PC-3 (cell line): ENCODE measurements at regions of chrX and their contacts with region 1.

Region 1: DNA sequence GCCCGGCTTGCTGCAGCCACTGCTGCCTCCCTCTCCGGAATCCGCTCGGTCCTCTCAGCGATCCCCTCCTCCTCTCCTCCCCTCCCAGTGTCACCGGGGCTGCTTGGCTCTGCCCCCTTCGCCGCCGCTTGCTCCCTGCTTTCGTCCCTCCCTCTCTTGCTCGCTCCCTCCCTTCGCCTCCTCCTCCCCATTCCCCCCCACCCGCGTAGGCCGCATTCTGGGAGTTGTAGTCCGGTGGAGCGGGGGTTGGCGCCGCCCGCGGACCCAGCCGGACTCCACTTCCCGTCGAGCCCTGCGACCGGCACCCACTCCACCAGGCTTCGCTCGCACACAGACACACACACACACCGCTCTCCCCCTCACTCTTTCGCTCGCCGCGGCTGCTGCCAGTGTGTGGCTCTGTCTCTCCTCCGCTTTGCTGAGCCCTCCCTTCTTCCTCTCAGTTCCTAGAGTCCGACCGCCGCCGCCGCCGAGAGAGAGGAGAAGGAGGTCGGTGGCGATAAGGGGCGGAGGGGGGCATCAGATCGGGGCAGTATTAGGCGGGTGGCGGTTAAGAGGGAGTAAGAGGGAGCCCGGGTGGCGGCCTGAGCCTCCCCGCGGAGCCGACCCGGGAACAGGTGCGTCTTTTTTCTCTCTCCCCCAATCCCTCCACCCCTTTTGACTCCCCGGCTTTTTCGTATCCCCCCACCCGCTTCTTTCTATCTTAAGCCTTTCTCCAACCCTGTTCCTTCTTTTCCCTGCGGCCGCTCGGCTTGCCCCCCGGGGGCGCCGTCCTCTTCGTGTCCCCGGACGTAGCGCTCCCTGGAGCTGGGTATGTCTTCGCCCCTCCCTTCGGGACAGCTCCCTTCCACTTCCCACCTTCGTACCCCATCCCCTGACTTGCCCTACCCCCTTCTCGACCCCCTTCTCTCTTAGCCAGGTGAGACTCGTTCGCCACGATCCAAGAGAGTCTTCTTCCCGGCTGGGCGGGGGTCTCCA is at the start of gene BCORL1:
- DNase-seq: peak; percentile 88
- ATAC-seq: peak; percentile 82
- H3K4me3 ChIP-seq: no peak within 1 kb of the TSS; the same call in 1 of the 2 replicates
- H3K27ac ChIP-seq: no peak within 1 kb of the TSS
- H3K4me1 ChIP-seq: peaks cover 5% of the 10 kb centered on the region; the same call in 1 of the 2 replicates
- H3K27me3 ChIP-seq: no peaks in the 10 kb centered on the region
- CTCF ChIP-seq: no peak
- total RNA-seq, gene BCORL1: 3.1 and 3.9 TPM in 2 replicates

Region 2: GRCh38 chrX:129510331-129510730 is 472.2 kb before region 1 on chrX:
- CTCF ChIA-PET with region 1: no interaction called
- POLR2A ChIA-PET with region 1: no interaction called
- intact Hi-C with region 1: no loop called
- DNase-seq: no peak
- ATAC-seq: no peak
- H3K4me3 ChIP-seq: no peak overlapping the region
- H3K27ac ChIP-seq: no peak overlapping the region
- H3K4me1 ChIP-seq: no peaks in the 10 kb centered on the region
- H3K27me3 ChIP-seq: no peaks in the 10 kb centered on the region
- CTCF ChIP-seq: no peak

Region 3: DNA sequence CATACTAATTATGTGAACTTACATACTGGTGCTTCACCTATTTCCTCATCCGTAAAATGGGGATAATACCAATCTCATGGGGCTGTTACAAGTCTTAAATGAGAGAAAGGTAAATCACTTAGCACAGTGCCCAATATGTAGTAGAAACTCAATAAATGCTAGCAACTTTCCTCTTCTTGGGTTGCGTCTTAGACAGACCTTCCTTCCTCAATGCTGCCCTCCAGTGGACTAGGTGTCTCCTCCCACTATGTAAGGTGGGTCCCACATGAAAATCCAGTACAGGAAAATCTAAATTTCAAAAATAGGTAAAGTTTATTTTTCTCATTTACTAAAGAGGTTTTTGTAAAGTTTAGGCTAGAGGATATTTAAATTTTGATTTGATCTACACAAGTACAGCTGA is 159.4 kb before region 1 on chrX:
- CTCF ChIA-PET with region 1: no interaction called
- POLR2A ChIA-PET with region 1: interaction called, 13 read pairs
- intact Hi-C with region 1: no loop called
- DNase-seq: peak; percentile 61
- ATAC-seq: peak; percentile 68; the same call in 1 of the 2 replicates
- H3K4me3 ChIP-seq: no peak overlapping the region
- H3K27ac ChIP-seq: no peak overlapping the region
- H3K4me1 ChIP-seq: no peaks in the 10 kb centered on the region
- H3K27me3 ChIP-seq: no peaks in the 10 kb centered on the region
- CTCF ChIP-seq: peak; percentile 72

Region 4: GRCh38 chrX:129925305-129926092 is 57.1 kb before region 1 on chrX:
- CTCF ChIA-PET with region 1: no interaction called
- POLR2A ChIA-PET with region 1: no interaction called
- intact Hi-C with region 1: loop called (anchors 2 kb)
- DNase-seq: peak; percentile 69
- ATAC-seq: peak; percentile 80
- H3K4me3 ChIP-seq: no peak overlapping the region
- H3K27ac ChIP-seq: no peak overlapping the region
- H3K4me1 ChIP-seq: no peaks in the 10 kb centered on the region
- H3K27me3 ChIP-seq: no peaks in the 10 kb centered on the region
- CTCF ChIP-seq: peak; percentile 71

Region 5: GRCh38 chrX:129961180-129962083 is 21.1 kb before region 1 on chrX:
- CTCF ChIA-PET with region 1: interaction called, 3 read pairs
- POLR2A ChIA-PET with region 1: no interaction called
- intact Hi-C with region 1: loop called (anchors 1 kb)
- DNase-seq: peak; percentile 81
- ATAC-seq: peak; percentile 94
- H3K4me3 ChIP-seq: peak overlapping the region; percentile 63
- H3K27ac ChIP-seq: no peak overlapping the region
- H3K4me1 ChIP-seq: peaks cover 12% of the 10 kb centered on the region
- H3K27me3 ChIP-seq: no peaks in the 10 kb centered on the region
- CTCF ChIP-seq: no peak

Region 6: GRCh38 chrX:130009658-130010223 is 27.2 kb after region 1 on chrX:
- CTCF ChIA-PET with region 1: interaction called, 10 read pairs
- POLR2A ChIA-PET with region 1: no interaction called
- intact Hi-C with region 1: no loop called
- DNase-seq: no peak
- ATAC-seq: no peak
- H3K4me3 ChIP-seq: no peak overlapping the region
- H3K27ac ChIP-seq: no peak overlapping the region
- H3K4me1 ChIP-seq: no peaks in the 10 kb centered on the region
- H3K27me3 ChIP-seq: no peaks in the 10 kb centered on the region
- CTCF ChIP-seq: no peak

Region 7: GRCh38 chrX:130060122-130061069 is 77.8 kb after region 1 on chrX:
- CTCF ChIA-PET with region 1: no interaction called
- POLR2A ChIA-PET with region 1: no interaction called
- intact Hi-C with region 1: loop called (anchors 2 kb)
- DNase-seq: peak; percentile 86
- ATAC-seq: peak; percentile 88
- H3K4me3 ChIP-seq: peak overlapping the region; percentile 68
- H3K27ac ChIP-seq: no peak overlapping the region
- H3K4me1 ChIP-seq: peaks cover 5% of the 10 kb centered on the region; the same call in 1 of the 2 replicates
- H3K27me3 ChIP-seq: no peaks in the 10 kb centered on the region
- CTCF ChIP-seq: peak; percentile 79

Region 8: GRCh38 chrX:130071611-130072344 is 89.2 kb after region 1 on chrX:
- CTCF ChIA-PET with region 1: no interaction called
- POLR2A ChIA-PET with region 1: no interaction called
- intact Hi-C with region 1: no loop called
- DNase-seq: no peak
- ATAC-seq: no peak
- H3K4me3 ChIP-seq: no peak overlapping the region
- H3K27ac ChIP-seq: no peak overlapping the region
- H3K4me1 ChIP-seq: no peaks in the 10 kb centered on the region
- H3K27me3 ChIP-seq: no peaks in the 10 kb centered on the region
- CTCF ChIP-seq: no peak